A673 (cell line): ENCODE measurements at regions of chr2 and their contacts with region 1.

Region 1: DNA sequence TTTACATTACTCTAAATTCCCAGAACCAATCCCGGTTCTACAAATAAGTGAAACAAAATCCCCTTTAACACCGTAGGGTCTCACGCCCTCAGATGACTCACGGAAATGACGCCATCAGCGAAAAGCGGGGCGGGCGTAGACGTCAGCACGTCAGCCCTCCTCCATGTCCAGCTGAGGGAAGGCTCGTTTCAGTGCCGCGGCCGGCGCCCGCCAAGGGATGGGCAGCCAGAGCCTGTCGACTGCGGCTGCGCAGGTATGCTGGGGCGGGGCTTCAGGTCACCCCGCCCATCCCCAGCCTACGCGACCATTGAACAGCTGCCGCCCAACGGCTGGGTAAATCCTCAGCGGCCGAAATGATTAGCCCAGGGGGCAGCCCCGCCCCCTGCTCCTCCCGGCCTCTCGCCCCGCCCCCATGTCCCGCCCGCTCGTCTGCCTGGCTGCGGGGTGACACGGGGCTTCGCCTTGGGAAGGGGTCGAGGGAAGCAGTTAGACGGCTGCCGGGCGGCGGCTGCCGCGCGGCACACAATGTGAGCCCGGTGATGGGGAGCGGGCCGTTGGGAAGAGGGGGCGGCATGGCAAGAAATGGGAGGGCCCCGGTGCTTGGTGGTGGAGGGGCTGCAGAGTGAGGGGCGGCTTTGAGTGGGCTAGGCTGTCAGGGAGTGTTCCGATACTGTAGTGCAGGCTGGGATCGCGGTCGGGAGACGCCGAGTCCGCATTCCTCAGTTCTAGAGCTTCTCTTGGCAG is at the start of gene NBEAL1:
- DNase-seq: peak; percentile 99
- H3K4me3 ChIP-seq: peak within 1 kb of the TSS; percentile 75
- H3K27ac ChIP-seq: peak within 1 kb of the TSS; percentile 92
- H3K4me1 ChIP-seq: peaks cover 26% of the 10 kb centered on the region
- H3K27me3 ChIP-seq: no peaks in the 10 kb centered on the region
- CTCF ChIP-seq: no peak
- total RNA-seq, gene NBEAL1: 14.1 and 15.8 TPM in 2 replicates

Region 2: DNA sequence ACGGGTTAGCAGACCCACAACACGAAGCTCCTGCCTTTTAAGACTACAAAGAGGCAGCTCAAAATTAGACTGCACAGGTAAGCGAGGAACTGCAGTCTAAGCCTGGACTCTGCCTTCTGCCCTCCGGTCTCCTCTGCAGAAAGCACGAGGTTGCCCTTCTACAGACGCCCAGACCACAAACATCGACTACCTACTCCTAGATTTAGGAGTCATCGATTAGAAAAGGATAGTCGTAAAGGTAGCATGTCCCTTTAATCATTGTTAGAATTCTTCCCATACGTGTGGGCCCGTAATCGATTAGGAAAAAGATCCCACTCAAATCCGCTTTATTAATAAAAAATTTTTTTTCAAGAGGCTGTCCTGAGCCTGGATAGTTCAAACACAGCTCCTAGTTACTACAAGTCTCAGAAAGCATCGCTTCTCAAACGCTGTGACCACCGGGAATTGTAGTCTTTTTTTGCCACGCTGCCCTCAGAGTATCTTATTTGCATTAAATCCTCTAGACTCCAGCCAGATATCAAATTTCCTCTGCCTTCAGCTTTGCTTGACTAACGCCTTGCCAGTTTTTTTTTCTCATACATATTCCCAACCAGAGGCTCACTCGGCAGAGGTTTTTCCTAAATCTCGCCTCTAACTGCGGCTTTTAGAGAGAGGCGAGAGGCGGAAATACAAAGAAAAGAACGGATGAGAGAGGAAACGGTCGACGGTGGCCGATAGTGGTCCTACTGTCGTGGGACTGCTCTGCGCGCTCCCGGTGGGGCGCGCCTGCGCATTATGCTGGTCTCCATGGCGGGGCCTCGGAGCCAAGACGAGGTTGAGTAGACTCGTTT is 102.9 kb before region 1 on chr2 and contains the starts of genes CARF and WDR12:
- CTCF ChIA-PET with region 1: no interaction called
- POLR2A ChIA-PET with region 1: no interaction called
- intact Hi-C with region 1: loop called (anchors 1 kb)
- DNase-seq: peak; percentile 96
- H3K4me3 ChIP-seq: peak within 1 kb of the TSS; percentile 75
- H3K27ac ChIP-seq: peak within 1 kb of the TSS; percentile 93
- H3K4me1 ChIP-seq: no peaks in the 10 kb centered on the region
- H3K27me3 ChIP-seq: no peaks in the 10 kb centered on the region
- CTCF ChIP-seq: no peak
- total RNA-seq, gene CARF: 5.1 and 7.1 TPM in 2 replicates
- total RNA-seq, gene WDR12: 152 and 164 TPM in 2 replicates

Region 3: GRCh38 chr2:203143391-203143790 is 128.8 kb after region 1 on chr2:
- CTCF ChIA-PET with region 1: no interaction called
- POLR2A ChIA-PET with region 1: no interaction called
- intact Hi-C with region 1: no loop called
- DNase-seq: no peak
- H3K4me3 ChIP-seq: no peak overlapping the region
- H3K27ac ChIP-seq: no peak overlapping the region
- H3K4me1 ChIP-seq: no peaks in the 10 kb centered on the region
- H3K27me3 ChIP-seq: no peaks in the 10 kb centered on the region
- CTCF ChIP-seq: no peak

Region 4: GRCh38 chr2:203484266-203485112 is 469.9 kb after region 1 on chr2:
- CTCF ChIA-PET with region 1: no interaction called
- POLR2A ChIA-PET with region 1: interaction called, 10 read pairs
- intact Hi-C with region 1: no loop called
- DNase-seq: peak; percentile 40
- H3K4me3 ChIP-seq: no peak overlapping the region
- H3K27ac ChIP-seq: no peak overlapping the region
- H3K4me1 ChIP-seq: no peaks in the 10 kb centered on the region
- H3K27me3 ChIP-seq: no peaks in the 10 kb centered on the region
- CTCF ChIP-seq: peak; percentile 49